Heart left ventricle (tissue), 16 donors: ENCODE measurements at regions of chr11 and their contacts with region 1.

Region 1: GRCh38 chr11:355581-356458 is 13.5 kb upstream of the B4GALNT4 start:
- DNase-seq: peak; percentile 95 to 97 (median 97)
- ATAC-seq: peak; percentile 75 to 91 (median 89)
- H3K4me3 ChIP-seq: peak overlapping the region in 11 of 12 donors; percentile 1 to 60 (median 48)
- H3K27ac ChIP-seq: peak overlapping the region; percentile 95 to 100 (median 99)
- H3K4me1 ChIP-seq: peaks cover 7 to 43% (median 30%) of the 10 kb centered on the region in 12 donors
- H3K27me3 ChIP-seq: peaks cover 0 to 7% (median 0%) of the 10 kb centered on the region in 9 donors
- CTCF ChIP-seq: peak in 1 of 12 donors; percentile 8
- POLR2A ChIP-seq: peak in 1 of 2 donors; percentile 70

Region 2: GRCh38 chr11:304915-305843 is 50.6 kb before region 1 on chr11:
- intact Hi-C with region 1: loop called in 7 of 10 experiments (anchors 5 to 10 kb)
- DNase-seq: peak in 4 of 5 donors; percentile 59 to 73 (median 68)
- ATAC-seq: peak in 1 of 4 donors; percentile 19
- H3K4me3 ChIP-seq: no peak overlapping the region
- H3K27ac ChIP-seq: peak overlapping the region in 6 of 12 donors; percentile 11 to 99 (median 62)
- H3K4me1 ChIP-seq: peaks cover 0 to 42% (median 15%) of the 10 kb centered on the region in 12 donors
- H3K27me3 ChIP-seq: peaks cover 0 to 21% (median 4%) of the 10 kb centered on the region in 9 donors
- CTCF ChIP-seq: peak; percentile 55 to 76 (median 64)
- POLR2A ChIP-seq: no peak

Region 3: DNA sequence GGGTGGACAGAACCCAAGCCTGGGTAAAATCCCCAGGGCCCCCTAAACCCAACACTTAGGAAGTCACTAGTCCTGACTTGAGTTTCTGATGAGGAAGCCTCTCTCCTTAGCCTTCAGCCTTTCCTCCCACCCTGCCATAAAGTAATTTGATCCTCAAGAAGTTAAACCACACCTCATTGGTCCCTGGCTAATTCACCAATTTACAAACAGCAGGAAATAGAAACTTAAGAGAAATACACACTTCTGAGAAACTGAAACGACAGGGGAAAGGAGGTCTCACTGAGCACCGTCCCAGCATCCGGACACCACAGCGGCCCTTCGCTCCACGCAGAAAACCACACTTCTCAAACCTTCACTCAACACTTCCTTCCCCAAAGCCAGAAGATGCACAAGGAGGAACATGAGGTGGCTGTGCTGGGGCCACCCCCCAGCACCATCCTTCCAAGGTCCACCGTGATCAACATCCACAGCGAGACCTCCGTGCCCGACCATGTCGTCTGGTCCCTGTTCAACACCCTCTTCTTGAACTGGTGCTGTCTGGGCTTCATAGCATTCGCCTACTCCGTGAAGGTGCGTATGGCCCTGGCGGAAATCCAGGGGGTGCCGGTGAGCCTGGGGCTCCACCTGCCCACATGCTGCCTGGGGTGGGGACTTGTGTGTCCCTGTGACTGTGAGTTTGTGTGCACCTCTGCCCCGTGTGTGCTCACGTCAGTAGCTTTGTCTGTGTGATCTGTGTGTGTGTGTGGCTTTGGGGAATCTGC is 41.9 kb before region 1 on chr11 and contains the start of gene IFITM1:
- intact Hi-C with region 1: loop called in 9 of 10 experiments (anchors 2 to 10 kb)
- DNase-seq: peak in 3 of 5 donors; percentile 60 to 68 (median 65)
- ATAC-seq: peak; percentile 18 to 59 (median 34)
- H3K4me3 ChIP-seq: peak within 1 kb of the TSS; percentile 28 to 89 (median 72)
- H3K27ac ChIP-seq: peak within 1 kb of the TSS; percentile 85 to 98 (median 92)
- H3K4me1 ChIP-seq: peaks cover 4 to 55% (median 25%) of the 10 kb centered on the region in 12 donors
- H3K27me3 ChIP-seq: peaks cover 0 to 22% (median 7%) of the 10 kb centered on the region in 9 donors
- CTCF ChIP-seq: no peak
- POLR2A ChIP-seq: peak in 1 of 2 donors; percentile 80
- total RNA-seq, gene IFITM1: 61.3 to 277 (median 127) TPM

Region 4: DNA sequence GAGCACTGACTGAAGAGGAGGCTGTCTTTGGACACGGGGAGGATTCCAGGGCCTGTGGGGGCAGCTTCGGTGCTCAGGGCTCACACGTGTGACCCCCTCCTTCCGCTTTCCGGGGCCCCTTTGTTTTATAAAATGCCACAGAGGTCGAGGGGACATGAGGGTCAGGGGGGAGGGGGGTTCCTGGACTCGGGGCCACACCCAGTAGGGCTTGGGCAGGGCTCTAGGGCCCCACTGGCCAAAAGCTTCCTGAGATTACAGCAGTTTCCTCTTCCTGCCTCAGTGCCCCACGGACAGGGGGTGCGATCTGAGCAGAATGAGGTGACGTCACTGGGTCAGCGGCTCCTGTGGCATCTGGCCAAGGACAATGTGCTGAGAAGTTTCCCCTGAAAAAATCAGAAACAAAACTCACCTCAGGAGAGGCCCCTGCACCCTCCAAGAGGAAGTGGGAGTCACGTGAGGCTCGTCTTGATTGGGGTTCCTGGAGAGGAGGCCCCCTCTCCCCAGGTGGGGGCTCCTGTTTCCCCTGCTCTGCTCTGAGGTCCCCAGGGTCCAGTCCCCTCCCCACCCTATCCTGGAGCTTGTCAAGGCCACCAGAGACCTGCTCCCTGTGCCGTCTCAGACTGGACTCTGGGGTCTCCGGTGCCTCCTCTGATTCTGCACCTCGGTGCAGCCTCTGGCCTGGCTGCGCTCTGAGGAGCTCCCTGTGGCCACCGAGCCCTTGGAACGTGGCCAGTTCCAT is 28.8 kb before region 1 on chr11:
- intact Hi-C with region 1: loop called in 3 of 10 experiments (anchors 2 kb)
- DNase-seq: peak; percentile 89 to 92 (median 90)
- ATAC-seq: peak; percentile 84 to 95 (median 90)
- H3K4me3 ChIP-seq: peak overlapping the region in 9 of 12 donors; percentile 4 to 31 (median 27)
- H3K27ac ChIP-seq: peak overlapping the region; percentile 89 to 99 (median 94)
- H3K4me1 ChIP-seq: peaks cover 3 to 76% (median 34%) of the 10 kb centered on the region in 12 donors
- H3K27me3 ChIP-seq: no peaks in the 10 kb centered on the region
- CTCF ChIP-seq: peak in 1 of 12 donors; percentile 4
- POLR2A ChIP-seq: peak in 1 of 2 donors; percentile 33

Region 5: DNA sequence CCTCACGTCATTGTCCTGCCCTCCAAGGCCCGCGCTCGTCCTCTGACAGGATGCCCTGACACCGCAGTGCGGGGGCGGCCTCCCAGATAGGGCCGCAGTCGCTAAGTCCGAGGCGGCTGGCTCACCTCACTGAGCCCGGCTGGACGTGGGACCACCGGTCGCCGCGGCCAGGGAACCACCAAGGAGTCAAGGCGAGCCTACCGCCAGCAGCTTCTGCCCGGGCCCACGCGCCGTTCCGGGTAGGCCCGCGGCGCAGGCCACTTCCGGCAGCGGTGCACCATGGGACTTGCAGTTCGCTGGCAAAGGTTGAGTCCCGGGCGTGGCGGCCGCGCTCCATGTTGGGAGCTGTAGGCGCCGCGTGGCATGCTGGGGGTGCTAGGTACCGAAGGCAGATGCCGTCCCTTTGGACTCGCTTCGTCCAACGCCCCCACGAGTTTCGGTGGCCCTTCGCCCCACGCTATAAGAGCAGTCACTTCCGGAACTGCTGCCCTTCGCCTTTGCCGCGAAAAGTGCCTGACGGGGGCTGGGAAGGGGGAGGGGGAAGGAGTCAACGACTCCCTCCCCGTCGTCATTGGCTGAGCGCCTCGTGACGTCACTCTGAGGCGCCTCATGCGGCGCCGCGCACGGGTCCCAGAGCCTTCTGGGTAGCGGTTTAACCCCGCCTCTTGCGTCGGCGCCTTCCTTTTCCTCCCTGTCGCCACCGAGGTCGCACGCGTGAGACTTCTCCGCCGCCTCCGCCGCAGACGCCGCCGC is 453.6 kb after region 1 on chr11 and contains the start of gene RPLP2:
- intact Hi-C with region 1: loop called in 1 of 10 experiments (anchors 10 kb)
- DNase-seq: peak; percentile 98 to 99 (median 99)
- ATAC-seq: peak; percentile 89 to 95 (median 93)
- H3K4me3 ChIP-seq: peak within 1 kb of the TSS; percentile 73 to 100 (median 96)
- H3K27ac ChIP-seq: peak within 1 kb of the TSS; percentile 76 to 100 (median 96)
- H3K4me1 ChIP-seq: peaks cover 5 to 50% (median 35%) of the 10 kb centered on the region in 12 donors
- H3K27me3 ChIP-seq: no peaks in the 10 kb centered on the region
- CTCF ChIP-seq: no peak
- POLR2A ChIP-seq: peak; percentile 60 to 81
- total RNA-seq, gene RPLP2: 236 to 1,207 (median 933) TPM